Tibial artery (tissue), 4 donors: ENCODE measurements at regions of chr17 and their contacts with region 1.

Region 1: GRCh38 chr17:43878260-43879175 is 28.8 kb downstream of the MPP2 start:
- DNase-seq: peak; percentile 58 to 81
- H3K4me3 ChIP-seq: no peak overlapping the region
- H3K27ac ChIP-seq: no peak overlapping the region
- H3K4me1 ChIP-seq: peaks cover 0 to 8% (median 1%) of the 10 kb centered on the region in 4 donors
- H3K27me3 ChIP-seq: no peaks in the 10 kb centered on the region
- CTCF ChIP-seq: peak; percentile 89 to 98

Region 2: DNA sequence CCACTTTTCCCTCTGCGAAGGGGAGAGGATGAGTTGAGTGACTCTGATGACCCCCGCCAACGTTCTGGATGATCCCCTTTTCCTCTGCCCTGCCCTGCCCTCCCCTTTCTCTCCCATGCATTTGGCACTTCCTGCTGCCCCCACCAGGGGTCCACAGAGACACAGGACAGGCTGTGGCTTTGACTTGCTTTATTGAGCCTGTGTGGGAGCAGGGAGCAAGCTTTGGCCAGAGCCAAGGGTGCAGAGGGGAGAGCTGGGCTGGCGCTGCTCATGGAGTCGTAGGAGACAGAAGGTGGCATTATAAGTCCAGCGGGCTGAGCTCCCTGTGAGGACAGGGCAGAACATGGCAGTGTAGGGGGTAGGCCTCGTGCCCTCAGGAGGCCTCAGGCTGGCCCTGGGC is 62.1 kb after region 1 on chr17:
- intact Hi-C with region 1: loop called (anchors 10 kb)
- DNase-seq: no peak
- H3K4me3 ChIP-seq: no peak overlapping the region
- H3K27ac ChIP-seq: no peak overlapping the region
- H3K4me1 ChIP-seq: peaks cover 0 to 8% (median 8%) of the 10 kb centered on the region in 4 donors
- H3K27me3 ChIP-seq: peaks cover 0 to 26% of the 10 kb centered on the region in 2 donors
- CTCF ChIP-seq: peak in 1 of 2 experiments; percentile 22

Region 3: GRCh38 chr17:43994272-43995149 is 116.0 kb after region 1 on chr17:
- intact Hi-C with region 1: loop called (anchors 10 kb)
- DNase-seq: peak in 1 of 2 donors; percentile 68
- H3K4me3 ChIP-seq: no peak overlapping the region
- H3K27ac ChIP-seq: no peak overlapping the region
- H3K4me1 ChIP-seq: peaks cover 0 to 9% (median 6%) of the 10 kb centered on the region in 4 donors
- H3K27me3 ChIP-seq: peaks cover 0 to 19% of the 10 kb centered on the region in 2 donors
- CTCF ChIP-seq: peak; percentile 61 to 65